Ovary (tissue), 10 donors: ENCODE measurements at regions of chr11 and their contacts with region 1.

Region 1: GRCh38 chr11:5631969-5632635 is 7.3 kb downstream of the TRIM34 start:
- DNase-seq: no peak
- H3K4me3 ChIP-seq: no peak overlapping the region
- H3K27ac ChIP-seq: no peak overlapping the region
- H3K4me1 ChIP-seq: no peaks in the 10 kb centered on the region
- H3K27me3 ChIP-seq: no peaks in the 10 kb centered on the region
- CTCF ChIP-seq: no peak
- EP300 ChIP-seq: no peak
- POLR2A ChIP-seq: no peak

Region 2: GRCh38 chr11:5277807-5278382 is 354.2 kb before region 1 on chr11:
- intact Hi-C with region 1: loop called in 1 of 4 experiments (anchors 10 kb)
- DNase-seq: no peak
- H3K4me3 ChIP-seq: no peak overlapping the region
- H3K27ac ChIP-seq: no peak overlapping the region
- H3K4me1 ChIP-seq: peaks cover 2% of the 10 kb centered on the region
- H3K27me3 ChIP-seq: no peaks in the 10 kb centered on the region
- CTCF ChIP-seq: no peak
- EP300 ChIP-seq: no peak
- POLR2A ChIP-seq: no peak